HAP-1 (cell line): ENCODE measurements at regions of chr13 and their contacts with region 1.

Region 1: GRCh38 chr13:94825507-94825906 is 113.2 kb upstream of the SOX21 start:
- DNase-seq: peak; percentile 95 to 96
- H3K4me3 ChIP-seq: no peak overlapping the region
- H3K4me1 ChIP-seq: peaks cover 43% of the 10 kb centered on the region
- H3K27me3 ChIP-seq: no peaks in the 10 kb centered on the region

Region 2: GRCh38 chr13:93843082-93843481 is 982.4 kb before region 1 on chr13:
- in situ Hi-C with region 1: no loop called
- DNase-seq: no peak
- H3K4me3 ChIP-seq: no peak overlapping the region
- H3K4me1 ChIP-seq: no peaks in the 10 kb centered on the region
- H3K27me3 ChIP-seq: no peaks in the 10 kb centered on the region

Region 3: DNA sequence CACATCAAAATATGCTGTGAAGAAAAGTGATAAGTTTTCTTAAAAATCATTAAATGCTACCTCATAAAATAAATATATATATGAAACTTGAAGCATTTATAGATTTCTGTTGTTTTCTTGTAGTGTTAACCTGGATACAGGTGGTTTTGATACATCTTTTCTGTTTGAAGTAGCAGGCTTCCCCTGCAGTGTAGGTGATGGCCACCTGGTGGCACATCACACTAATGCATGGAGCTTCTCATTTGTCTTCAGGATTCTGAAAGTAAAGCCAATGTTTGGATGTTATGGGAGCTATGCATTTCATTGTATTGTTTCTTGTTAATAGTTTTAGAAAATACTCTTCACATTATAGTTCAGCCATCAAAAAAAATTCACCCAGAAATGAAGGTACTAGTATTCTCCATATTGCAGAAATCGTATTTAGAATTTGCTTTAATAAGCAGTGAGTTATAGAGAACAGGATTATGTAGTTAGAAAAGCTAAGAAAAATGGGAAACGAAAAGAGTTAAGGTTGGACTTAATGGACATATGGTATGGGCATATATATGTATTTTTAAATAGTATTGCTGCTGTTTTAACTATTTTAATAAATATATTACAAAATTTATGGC is 205.1 kb before region 1 on chr13:
- in situ Hi-C with region 1: no loop called
- DNase-seq: peak; percentile 51 to 60
- H3K4me3 ChIP-seq: no peak overlapping the region
- H3K4me1 ChIP-seq: no peaks in the 10 kb centered on the region
- H3K27me3 ChIP-seq: no peaks in the 10 kb centered on the region

Region 4: GRCh38 chr13:94710881-94711560 is 114.5 kb before region 1 on chr13:
- in situ Hi-C with region 1: loop called (anchors 10 kb)
- DNase-seq: peak; percentile 51 to 72
- H3K4me3 ChIP-seq: peak overlapping the region; percentile 50
- H3K4me1 ChIP-seq: peaks cover 37% of the 10 kb centered on the region
- H3K27me3 ChIP-seq: no peaks in the 10 kb centered on the region

Region 5: DNA sequence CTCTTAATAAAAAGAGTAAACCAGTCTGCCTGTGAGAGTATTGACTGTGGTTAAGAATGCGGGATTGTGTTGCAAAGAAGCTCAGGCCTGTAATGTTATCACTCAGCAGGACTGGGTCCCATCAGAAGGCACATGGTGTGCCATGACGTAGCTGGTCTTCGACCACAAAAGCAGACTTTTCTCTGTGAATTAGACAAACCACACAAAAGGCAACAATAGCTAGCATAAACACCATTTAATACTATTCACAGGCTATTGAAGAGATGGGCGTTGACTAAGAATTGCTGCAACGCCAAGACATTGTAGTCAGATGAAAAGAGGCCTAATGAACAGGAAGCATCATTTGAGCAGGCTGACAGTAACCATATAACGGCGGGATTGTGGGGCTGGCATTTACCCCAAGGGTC is 122.5 kb after region 1 on chr13:
- in situ Hi-C with region 1: loop called (anchors 10 kb)
- DNase-seq: peak; percentile 87 to 100
- H3K4me3 ChIP-seq: no peak overlapping the region
- H3K4me1 ChIP-seq: peaks cover 25% of the 10 kb centered on the region
- H3K27me3 ChIP-seq: 0 out of 2 replicates have a peak, but pooled peaks cover 2% of the 10 kb centered on the region